ENCODE measurements at regions of chr12 and their contacts with region 1.

Region 1: DNA sequence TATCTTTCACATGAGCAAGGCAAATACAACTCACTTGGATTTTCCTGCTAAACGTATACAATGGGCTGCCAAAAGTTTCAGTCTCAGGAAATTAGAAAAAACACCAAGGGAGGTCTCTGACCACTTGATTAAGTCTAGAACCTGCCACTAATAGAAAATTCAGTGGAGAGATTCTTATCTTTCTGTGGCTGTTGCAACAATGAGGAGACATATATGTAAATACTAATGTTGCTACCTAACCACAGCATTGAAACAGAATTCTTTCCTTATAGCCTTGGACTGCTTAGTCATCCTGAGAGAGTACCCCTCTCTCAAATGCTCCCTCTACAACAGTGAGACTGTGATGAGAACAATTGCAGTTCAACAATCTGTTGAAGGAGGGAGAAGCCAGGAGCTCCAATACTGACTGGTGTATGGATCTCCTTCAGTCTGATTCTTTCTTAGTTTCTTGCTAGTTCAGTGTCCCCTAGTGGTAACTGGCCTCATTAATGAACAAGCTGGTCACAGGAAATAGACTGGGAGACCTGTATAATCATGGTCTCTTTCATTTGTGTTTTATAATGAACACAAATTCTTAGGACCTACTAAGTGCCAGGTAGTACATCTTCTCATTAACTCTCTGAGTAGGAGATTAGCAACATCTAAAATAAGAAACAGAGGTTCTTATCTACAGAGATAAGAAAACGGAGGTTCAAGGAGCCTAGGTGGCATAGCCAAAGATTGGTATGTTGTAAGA is 164.5 kb downstream of the SLC38A4 start:
- DNase-seq: peak in 4 of 5 donors; percentile 48 to 55 (median 52)
- H3K4me3 ChIP-seq: no peak overlapping the region
- H3K4me3 Mint-ChIP-seq: no peak overlapping the region
- H3K27ac ChIP-seq: no peak overlapping the region
- H3K27ac Mint-ChIP-seq: peak overlapping the region in 1 of 7 donors; percentile 43
- H3K4me1 ChIP-seq: peaks cover 14% of the 10 kb centered on the region
- H3K4me1 Mint-ChIP-seq: peaks cover 16 to 27% (median 22%) of the 10 kb centered on the region in 4 donors
- H3K27me3 ChIP-seq: no peaks in the 10 kb centered on the region
- H3K27me3 Mint-ChIP-seq: no peaks in the 10 kb centered on the region

Region 2: DNA sequence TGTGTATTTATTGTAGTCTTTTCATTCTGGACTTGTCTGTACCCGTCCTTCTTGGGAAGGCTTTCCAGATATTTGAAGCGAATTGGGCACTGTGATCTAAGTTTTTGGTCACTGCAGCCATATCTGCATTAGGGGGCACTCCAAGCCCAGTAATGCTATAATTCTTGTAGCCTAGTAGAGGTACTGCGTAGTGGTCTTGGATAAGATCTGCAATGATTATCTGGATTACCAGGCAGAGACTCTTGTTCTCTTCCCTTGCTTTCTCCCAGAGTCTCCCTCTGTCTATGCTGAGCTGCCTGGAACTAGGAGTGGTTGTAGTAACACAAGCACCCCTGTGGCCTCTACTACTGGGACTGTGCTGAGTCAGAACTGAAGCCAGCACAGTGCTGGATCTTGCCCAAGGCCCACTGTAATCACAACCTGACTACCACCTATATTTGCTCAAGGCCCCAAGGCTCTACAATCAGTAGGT is 318.7 kb before region 1 on chr12:
- CTCF ChIA-PET with region 1: interaction called, 3 read pairs
- POLR2A ChIA-PET with region 1: no interaction called
- intact Hi-C with region 1: loop called (anchors 1 kb)
- DNase-seq: peak in 4 of 5 donors; percentile 36 to 45 (median 39)
- H3K4me3 ChIP-seq: no peak overlapping the region
- H3K4me3 Mint-ChIP-seq: no peak overlapping the region
- H3K27ac ChIP-seq: no peak overlapping the region
- H3K27ac Mint-ChIP-seq: no peak overlapping the region
- H3K4me1 ChIP-seq: no peaks in the 10 kb centered on the region
- H3K4me1 Mint-ChIP-seq: no peaks in the 10 kb centered on the region
- H3K27me3 ChIP-seq: no peaks in the 10 kb centered on the region
- H3K27me3 Mint-ChIP-seq: peaks cover 5% of the 10 kb centered on the region in 2 donors

Region 3: DNA sequence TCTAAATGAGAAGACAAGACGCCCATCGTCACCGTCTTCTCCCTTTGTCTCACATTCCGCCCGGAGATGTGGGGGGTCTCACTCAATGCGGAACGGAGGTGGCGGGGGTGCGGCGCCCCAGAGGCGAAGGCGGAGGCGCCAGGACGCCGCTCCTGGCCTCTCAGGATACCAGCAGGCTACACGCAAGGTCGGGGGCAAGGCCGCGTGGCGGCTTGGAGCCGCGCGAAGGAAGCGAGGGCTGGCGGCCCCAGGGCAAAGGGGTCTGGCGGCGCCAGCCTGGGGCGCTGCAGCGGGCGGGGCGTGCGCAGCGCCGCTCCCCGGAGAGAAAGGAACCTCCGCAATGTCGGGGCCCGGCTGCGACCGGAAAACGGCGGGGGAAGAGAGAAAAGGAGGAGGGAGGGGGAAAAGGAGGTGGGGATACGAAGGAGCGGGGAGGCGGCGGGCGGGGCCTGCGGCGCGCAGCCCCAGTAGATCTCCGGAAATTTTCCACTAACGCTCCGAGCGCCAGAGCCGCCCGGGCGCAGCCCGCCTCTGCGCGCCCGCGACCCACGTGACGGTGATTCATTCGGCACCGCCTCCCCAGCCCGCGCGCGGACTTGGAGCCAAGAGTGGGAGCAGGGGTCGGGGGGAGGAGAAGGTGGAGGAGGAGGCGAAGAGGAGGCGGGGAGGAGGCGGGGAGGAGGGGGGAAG is 278.2 kb before region 1 on chr12:
- CTCF ChIA-PET with region 1: interaction called, 11 read pairs
- POLR2A ChIA-PET with region 1: interaction called, 10 read pairs
- intact Hi-C with region 1: no loop called
- DNase-seq: peak; percentile 88 to 95 (median 90)
- H3K4me3 ChIP-seq: peak overlapping the region; percentile 26 to 78
- H3K4me3 Mint-ChIP-seq: peak overlapping the region; percentile 82 to 94 (median 90)
- H3K27ac ChIP-seq: peak overlapping the region; percentile 83
- H3K27ac Mint-ChIP-seq: peak overlapping the region; percentile 87 to 98 (median 97)
- H3K4me1 ChIP-seq: peaks cover 19% of the 10 kb centered on the region
- H3K4me1 Mint-ChIP-seq: peaks cover 19 to 31% (median 25%) of the 10 kb centered on the region in 4 donors
- H3K27me3 ChIP-seq: no peaks in the 10 kb centered on the region
- H3K27me3 Mint-ChIP-seq: no peaks in the 10 kb centered on the region

Region 4: GRCh38 chr12:46516933-46517578 is 144.2 kb before region 1 on chr12:
- CTCF ChIA-PET with region 1: interaction called, 9 read pairs
- POLR2A ChIA-PET with region 1: no interaction called
- intact Hi-C with region 1: loop called (anchors 5 kb)
- DNase-seq: peak in 4 of 5 donors; percentile 14 to 23 (median 15)
- H3K4me3 ChIP-seq: no peak overlapping the region
- H3K4me3 Mint-ChIP-seq: peak overlapping the region in 7 of 8 donors; percentile 27 to 87 (median 76)
- H3K27ac ChIP-seq: no peak overlapping the region
- H3K27ac Mint-ChIP-seq: peak overlapping the region; percentile 15 to 91 (median 85)
- H3K4me1 ChIP-seq: peaks cover 12% of the 10 kb centered on the region
- H3K4me1 Mint-ChIP-seq: peaks cover 22 to 51% (median 30%) of the 10 kb centered on the region in 4 donors
- H3K27me3 ChIP-seq: no peaks in the 10 kb centered on the region
- H3K27me3 Mint-ChIP-seq: no peaks in the 10 kb centered on the region

Region 5: GRCh38 chr12:46693034-46693433 is 31.8 kb after region 1 on chr12:
- CTCF ChIA-PET with region 1: no interaction called
- POLR2A ChIA-PET with region 1: no interaction called
- intact Hi-C with region 1: no loop called
- DNase-seq: no peak
- H3K4me3 ChIP-seq: no peak overlapping the region
- H3K4me3 Mint-ChIP-seq: no peak overlapping the region
- H3K27ac ChIP-seq: no peak overlapping the region
- H3K27ac Mint-ChIP-seq: no peak overlapping the region
- H3K4me1 ChIP-seq: no peaks in the 10 kb centered on the region
- H3K4me1 Mint-ChIP-seq: no peaks in the 10 kb centered on the region
- H3K27me3 ChIP-seq: no peaks in the 10 kb centered on the region
- H3K27me3 Mint-ChIP-seq: peaks cover 0 to 1% of the 10 kb centered on the region in 2 donors